Activated T-helper 1 cell treated with anti-CD3 and anti-CD28 coated beads, Interleukin-12 subunit alpha, Interleukin-12 subunit beta, Interleukin-2, Interleukin-4 antibody, amounts not matched to agents 30 ng/mL and 10 ng/mL and 1 ng/mL, durations not matched to agents 14 hours and 24 hours and 36 hours (primary cell): ENCODE measurements at regions of chr1 and their contacts with region 1.

Region 1: GRCh38 chr1:67760030-67760821 is 73.0 kb downstream of the GNG12 start:
- DNase-seq: peak; percentile 19
- H3K4me3 Mint-ChIP-seq: no peak overlapping the region
- H3K27ac Mint-ChIP-seq: no peak overlapping the region
- H3K4me1 Mint-ChIP-seq: no peaks in the 10 kb centered on the region
- H3K27me3 Mint-ChIP-seq: peaks cover 27% of the 10 kb centered on the region

Region 2: DNA sequence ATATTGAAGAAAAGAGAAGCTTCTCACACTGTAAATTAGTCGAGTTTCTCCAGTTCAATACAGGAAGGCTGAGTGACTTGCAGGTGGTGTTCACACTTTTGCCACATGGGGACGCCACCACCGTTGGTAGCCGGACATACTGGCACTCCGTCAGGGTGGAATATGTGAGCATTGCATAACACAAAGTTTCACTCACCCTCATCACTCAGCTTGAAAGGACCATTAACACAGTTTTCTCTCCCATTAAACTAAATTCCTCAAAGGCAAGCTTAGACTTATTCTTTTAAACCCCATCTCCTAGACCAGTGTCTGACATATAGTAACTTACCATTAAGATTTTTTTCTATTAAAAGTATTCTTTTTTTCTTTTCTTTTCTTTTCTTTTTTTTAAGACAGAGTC is 224.8 kb before region 1 on chr1:
- intact Hi-C with region 1: loop called (anchors 1 kb)
- DNase-seq: peak; percentile 8
- H3K4me3 Mint-ChIP-seq: no peak overlapping the region
- H3K27ac Mint-ChIP-seq: no peak overlapping the region
- H3K4me1 Mint-ChIP-seq: no peaks in the 10 kb centered on the region
- H3K27me3 Mint-ChIP-seq: peaks cover 6% of the 10 kb centered on the region

Region 3: GRCh38 chr1:67561704-67562113 is 198.5 kb before region 1 on chr1:
- intact Hi-C with region 1: loop called (anchors 1 kb)
- DNase-seq: peak; percentile 69
- H3K4me3 Mint-ChIP-seq: no peak overlapping the region
- H3K27ac Mint-ChIP-seq: no peak overlapping the region
- H3K4me1 Mint-ChIP-seq: peaks cover 5% of the 10 kb centered on the region
- H3K27me3 Mint-ChIP-seq: peaks cover 16% of the 10 kb centered on the region

Region 4: GRCh38 chr1:68346188-68346808 is 586.1 kb after region 1 on chr1:
- intact Hi-C with region 1: loop called (anchors 10 kb)
- DNase-seq: no peak
- H3K4me3 Mint-ChIP-seq: no peak overlapping the region
- H3K27ac Mint-ChIP-seq: no peak overlapping the region
- H3K4me1 Mint-ChIP-seq: no peaks in the 10 kb centered on the region
- H3K27me3 Mint-ChIP-seq: no peaks in the 10 kb centered on the region